Vagina (tissue), 2 donors: ENCODE measurements at regions of chr11 and their contacts with region 1.

Region 1: DNA sequence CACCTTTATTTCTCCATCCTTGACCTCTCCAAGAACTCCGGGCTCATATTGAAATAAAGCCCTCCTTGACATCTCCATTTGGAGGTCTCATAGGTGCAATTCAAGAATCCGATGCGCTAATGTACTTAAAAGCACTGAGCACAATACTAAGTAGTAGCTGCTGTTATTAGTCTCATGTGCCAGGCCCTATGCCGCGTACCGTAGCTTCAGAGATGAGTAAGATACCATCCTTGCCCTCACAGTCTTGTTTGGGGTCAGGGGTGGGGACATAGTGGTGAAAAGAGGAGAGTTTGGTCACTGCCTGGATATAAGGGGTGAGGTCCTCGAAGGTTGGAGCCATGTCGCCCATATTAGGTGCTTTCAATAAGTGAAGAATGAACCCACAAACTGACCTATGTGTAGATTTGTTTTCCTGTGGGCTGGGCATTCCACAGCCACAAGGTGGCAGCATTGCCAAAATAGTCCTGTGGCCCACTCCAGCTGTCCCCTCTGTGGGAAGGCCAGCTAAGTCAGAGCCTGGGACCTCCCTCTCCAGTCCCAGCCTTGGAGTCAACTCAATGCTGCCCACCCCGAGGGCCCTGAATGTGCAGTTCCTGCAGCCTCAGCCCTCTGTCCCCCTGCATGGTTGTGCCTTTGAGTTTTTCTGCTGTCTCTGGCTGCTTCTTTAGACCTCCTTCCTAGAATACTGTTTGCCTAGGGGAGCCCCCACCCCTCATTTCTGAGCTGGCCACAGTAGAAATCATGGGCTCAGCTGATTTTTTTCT is 6.5 kb downstream of the DCPS start:
- DNase-seq: no peak
- H3K4me3 ChIP-seq: no peak overlapping the region
- H3K27ac ChIP-seq: peak overlapping the region; percentile 38
- H3K4me1 ChIP-seq: peaks cover 6% of the 10 kb centered on the region
- H3K27me3 ChIP-seq: no peaks in the 10 kb centered on the region
- CTCF ChIP-seq: peak; percentile 81 to 90 (median 89)
- POLR2A ChIP-seq: no peak

Region 2: DNA sequence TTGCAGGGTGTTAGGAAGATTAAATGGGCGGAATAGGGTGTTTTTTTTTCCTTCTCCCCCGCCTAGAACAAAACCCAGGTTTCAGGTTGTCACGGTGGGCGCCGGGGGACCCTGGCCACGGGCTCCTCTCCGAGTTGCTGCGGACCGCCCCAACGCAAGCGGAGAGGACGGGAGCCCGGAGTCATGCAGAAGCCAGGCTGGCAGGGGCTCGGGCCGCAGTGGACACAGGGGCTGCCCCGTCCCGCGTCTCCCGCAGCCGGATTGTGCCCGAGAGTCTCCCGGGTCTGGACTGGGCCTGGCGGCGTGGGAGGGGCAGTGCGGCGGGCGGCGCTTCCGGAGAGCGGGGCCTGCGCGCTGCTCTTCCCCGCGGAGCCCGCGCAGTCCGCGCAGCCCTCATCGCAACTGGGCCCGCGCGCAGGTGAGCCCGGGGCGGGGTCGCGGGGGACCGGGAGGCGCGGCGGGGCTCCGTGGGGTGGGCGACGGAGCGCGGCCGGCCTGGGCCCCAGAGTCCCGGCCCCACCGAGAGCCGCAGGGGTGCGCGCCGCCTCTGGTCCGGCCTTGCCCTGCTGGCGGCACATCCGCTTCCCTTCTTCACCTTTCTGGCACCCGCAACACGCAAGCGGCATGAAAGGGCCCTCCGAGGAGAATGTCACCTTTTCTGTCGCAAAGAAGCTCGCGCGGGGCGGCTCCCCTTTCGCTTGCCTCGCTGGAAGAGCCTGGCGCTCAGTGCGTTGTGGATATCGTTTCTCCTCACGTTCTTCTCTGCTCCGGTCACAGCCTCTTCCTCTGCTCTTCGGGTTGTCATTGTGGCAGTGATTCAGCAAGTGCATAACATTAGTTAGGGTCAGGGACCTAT is 27.4 kb before region 1 on chr11 and contains the start of gene TIRAP:
- intact Hi-C with region 1: no loop called
- DNase-seq: no peak
- H3K4me3 ChIP-seq: peak within 1 kb of the TSS; percentile 81 to 86
- H3K27ac ChIP-seq: peak within 1 kb of the TSS; percentile 89
- H3K4me1 ChIP-seq: peaks cover 25% of the 10 kb centered on the region
- H3K27me3 ChIP-seq: no peaks in the 10 kb centered on the region
- CTCF ChIP-seq: no peak
- POLR2A ChIP-seq: peak in 1 of 2 donors; percentile 49
- total RNA-seq, gene TIRAP: 16.9 TPM

Region 3: DNA sequence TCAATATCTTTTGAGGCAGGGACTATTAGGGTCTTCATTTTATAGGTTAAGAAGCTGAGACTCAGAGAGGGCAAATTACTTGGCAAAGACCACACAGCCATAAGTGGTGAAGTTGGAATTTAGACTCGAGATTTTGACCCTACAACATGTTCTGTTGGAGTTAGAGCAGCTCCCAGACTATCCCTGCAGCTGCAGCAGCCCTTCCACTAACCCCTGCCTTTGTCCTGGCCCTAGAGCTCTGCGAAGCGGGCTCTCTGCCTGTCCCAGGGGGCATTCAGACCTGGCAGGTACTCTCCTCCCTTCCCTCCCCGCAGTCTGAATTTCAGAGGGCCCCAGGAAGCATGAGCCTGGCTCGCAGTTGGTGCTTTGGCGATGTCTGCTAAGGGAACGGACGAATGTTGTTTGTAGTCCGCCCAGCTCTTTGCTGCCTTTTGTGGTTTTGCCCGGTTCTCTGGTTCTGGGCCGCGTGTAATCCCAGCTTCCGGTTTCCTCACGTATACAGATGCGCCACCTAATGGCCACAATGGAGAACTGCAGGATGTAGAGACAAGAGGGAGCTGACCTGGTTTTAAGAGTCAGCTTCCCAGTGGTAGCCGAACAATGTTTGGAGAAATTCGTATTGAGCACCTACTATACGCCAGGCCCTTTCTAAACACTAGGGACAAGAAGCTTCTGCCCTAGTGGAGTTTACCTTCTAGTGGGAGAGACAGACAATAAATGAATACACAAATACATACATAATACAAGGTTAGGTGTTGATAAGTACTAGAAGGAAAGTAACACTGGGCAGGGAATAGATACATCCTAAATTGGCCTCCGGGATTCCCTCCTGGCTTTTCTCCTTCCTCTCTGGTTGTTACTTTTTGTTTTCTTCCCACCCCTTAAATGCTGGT is 170.2 kb after region 1 on chr11:
- intact Hi-C with region 1: loop called (anchors 5 kb)
- DNase-seq: no peak
- H3K4me3 ChIP-seq: no peak overlapping the region
- H3K27ac ChIP-seq: peak overlapping the region; percentile 47
- H3K4me1 ChIP-seq: peaks cover 4% of the 10 kb centered on the region
- H3K27me3 ChIP-seq: no peaks in the 10 kb centered on the region
- CTCF ChIP-seq: peak; percentile 85 to 96 (median 87)
- POLR2A ChIP-seq: no peak